SK-N-SH (cell line): ENCODE measurements at regions of chr10 and their contacts with region 1.

Region 1: DNA sequence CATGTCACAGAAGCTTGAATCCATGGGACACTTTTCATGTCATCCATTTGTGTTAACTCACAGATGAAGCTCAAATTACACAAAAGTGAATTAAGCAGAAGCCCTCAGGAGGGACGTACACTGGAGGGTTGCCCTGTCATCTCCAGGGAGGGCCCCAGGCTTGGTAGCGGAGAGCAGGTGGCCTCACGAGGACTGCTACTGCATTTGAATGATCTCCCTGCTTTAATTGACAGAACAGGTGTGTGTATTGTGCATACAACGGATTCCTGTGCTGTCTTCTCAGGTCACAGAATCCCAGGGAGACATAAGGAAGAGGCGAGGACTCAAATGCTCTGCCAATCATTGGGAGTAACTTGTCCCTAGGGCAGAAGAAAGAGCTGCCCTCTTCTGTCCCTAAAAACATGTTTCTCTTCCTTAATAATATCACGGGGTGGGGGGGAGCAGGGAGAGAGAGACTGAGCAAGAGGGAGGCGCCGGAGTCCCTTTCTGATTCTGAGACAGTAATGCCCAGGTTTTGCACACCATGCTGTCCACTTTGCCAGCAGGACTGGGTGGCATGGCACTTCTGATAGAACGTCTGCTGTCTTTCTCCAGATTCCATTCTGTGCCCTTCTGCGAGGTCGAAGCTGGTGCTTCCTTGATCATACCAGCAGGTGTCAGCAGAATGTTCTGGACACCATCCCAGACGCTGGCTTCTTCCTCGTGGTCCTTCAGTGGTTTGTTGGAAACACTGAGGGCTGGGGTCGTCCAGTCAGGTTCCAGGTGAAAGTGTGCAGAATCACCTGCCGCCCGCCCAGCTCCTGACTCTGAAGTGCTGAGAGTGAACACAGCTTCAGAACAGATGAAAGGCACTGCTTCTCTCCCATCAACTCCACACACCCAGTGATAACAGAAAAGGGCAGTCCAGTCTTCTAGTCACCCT is 26.2 kb upstream of the RASGEF1A start:
- DNase-seq: peak; percentile 78
- H3K4me3 ChIP-seq: no peak overlapping the region
- H3K27ac ChIP-seq: no peak overlapping the region
- H3K4me1 ChIP-seq: peaks cover 0 to 4% of the 10 kb centered on the region in 2 experiments; a peak in 1 of 4 replicates
- H3K27me3 ChIP-seq: peaks cover 15% of the 10 kb centered on the region; the same call in 1 of the 2 replicates
- CTCF ChIP-seq: peak; percentile 69
- EP300 ChIP-seq: no peak
- RAD21 ChIP-seq: peak; percentile 80

Region 2: DNA sequence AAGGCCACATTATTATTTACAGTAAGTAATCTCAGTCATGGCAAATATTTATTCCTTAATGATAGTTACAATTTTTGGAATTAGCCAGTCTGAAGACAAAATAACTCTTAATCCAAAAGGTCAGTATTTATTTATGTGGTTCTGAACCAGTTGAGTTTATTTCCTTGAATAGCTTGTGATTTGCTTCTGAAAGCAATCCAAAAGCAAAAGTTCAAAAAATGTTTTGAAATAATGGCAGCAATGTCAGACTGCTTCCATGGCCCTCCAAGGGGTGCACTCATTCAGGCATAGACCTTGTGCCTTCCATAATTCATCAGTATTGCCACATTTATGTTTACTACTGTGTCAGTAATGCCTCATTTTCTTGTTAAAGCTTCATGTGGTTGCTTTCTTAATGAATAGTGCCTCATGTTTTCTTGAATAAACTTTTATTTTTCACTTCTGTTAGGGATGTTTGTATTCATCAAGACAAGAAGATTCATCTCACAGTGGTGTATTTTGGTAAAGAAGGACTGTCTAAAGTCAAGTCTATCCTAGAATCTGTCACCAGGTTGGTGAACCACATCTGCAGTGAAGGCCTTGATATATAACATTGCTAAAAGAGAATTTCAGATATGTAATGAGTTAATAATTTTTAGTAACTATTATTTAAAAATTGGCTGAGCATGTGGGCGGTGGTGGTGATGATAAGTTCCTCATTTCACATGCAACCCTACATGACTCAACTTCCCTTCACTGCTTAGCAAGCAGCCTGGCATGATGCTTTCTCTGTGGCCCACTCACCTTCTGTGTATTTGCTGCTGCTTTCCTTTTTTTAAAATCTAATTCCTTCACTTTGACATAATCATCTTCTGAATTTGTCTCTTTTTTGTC is 132.7 kb before region 1 on chr10:
- CTCF ChIA-PET with region 1: no interaction called
- POLR2A ChIA-PET with region 1: no interaction called
- DNase-seq: no peak
- H3K4me3 ChIP-seq: no peak overlapping the region
- H3K27ac ChIP-seq: peak overlapping the region in 1 of 2 experiments; percentile 21; a peak in 1 of 4 replicates
- H3K4me1 ChIP-seq: peaks cover 0 to 5% of the 10 kb centered on the region in 2 experiments; a peak in 2 of 4 replicates
- H3K27me3 ChIP-seq: no peaks in the 10 kb centered on the region
- CTCF ChIP-seq: no peak
- EP300 ChIP-seq: no peak
- RAD21 ChIP-seq: no peak

Region 3: DNA sequence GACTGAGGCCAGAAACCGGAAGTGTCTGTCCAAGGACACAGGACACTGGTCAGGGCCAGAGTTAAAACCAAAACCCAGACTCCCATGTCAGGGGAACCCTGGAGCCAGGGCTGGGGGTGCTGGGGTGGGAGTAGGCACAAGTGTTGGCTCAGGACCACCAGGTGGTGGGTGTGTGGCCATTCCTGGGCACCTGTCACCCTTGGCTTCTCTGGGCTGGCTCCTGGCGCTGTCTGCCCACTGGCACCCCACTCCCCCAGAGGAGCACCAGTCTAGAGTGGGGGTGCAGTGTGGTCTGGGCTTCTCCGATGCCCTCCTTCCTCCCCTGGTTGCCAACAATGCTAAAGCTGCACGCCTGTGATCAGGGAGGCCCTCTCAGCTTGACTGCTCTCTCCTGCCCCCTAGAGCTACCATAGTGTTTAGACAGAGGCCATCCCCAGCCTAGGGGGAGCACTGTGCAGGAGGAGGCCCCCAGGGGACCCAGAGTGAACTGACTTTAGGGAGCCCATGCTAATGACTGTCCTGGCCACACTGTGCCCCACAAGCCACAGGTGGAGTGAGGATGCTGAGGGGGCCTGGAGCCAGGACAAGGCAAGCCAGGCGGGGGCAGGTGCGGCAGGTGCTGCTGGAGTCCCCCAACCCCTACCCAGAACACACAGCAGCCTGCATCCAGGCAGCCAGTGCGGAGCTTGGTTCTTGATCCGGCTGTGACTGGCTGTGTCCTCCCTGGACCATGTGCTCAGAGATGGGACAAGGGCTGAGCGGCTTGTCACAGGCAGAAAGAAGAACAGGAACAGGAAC is 37.2 kb before region 1 on chr10:
- CTCF ChIA-PET with region 1: interaction called, 11 read pairs
- POLR2A ChIA-PET with region 1: no interaction called
- DNase-seq: peak; percentile 82
- H3K4me3 ChIP-seq: peak overlapping the region in 1 of 2 experiments; percentile 19; a peak in 1 of 4 replicates
- H3K27ac ChIP-seq: no peak overlapping the region
- H3K4me1 ChIP-seq: peaks cover 0 to 7% of the 10 kb centered on the region in 2 experiments; a peak in 1 of 4 replicates
- H3K27me3 ChIP-seq: 0 out of 2 replicates have a peak, but pooled peaks cover 9% of the 10 kb centered on the region
- CTCF ChIP-seq: peak; percentile 50
- EP300 ChIP-seq: no peak
- RAD21 ChIP-seq: peak; percentile 62

Region 4: GRCh38 chr10:43278216-43278615 is 14.8 kb before region 1 on chr10:
- CTCF ChIA-PET with region 1: interaction called, 23 read pairs
- POLR2A ChIA-PET with region 1: no interaction called
- DNase-seq: no peak
- H3K4me3 ChIP-seq: no peak overlapping the region
- H3K27ac ChIP-seq: no peak overlapping the region
- H3K4me1 ChIP-seq: no peaks in the 10 kb centered on the region
- H3K27me3 ChIP-seq: peaks cover 13% of the 10 kb centered on the region; the same call in 1 of the 2 replicates
- CTCF ChIP-seq: no peak
- EP300 ChIP-seq: no peak
- RAD21 ChIP-seq: no peak

Region 5: GRCh38 chr10:43348511-43349312 is 55.7 kb after region 1 on chr10:
- CTCF ChIA-PET with region 1: interaction called, 90 read pairs
- POLR2A ChIA-PET with region 1: no interaction called
- DNase-seq: peak; percentile 95
- H3K4me3 ChIP-seq: no peak overlapping the region; a peak in 1 of 4 replicates
- H3K27ac ChIP-seq: no peak overlapping the region
- H3K4me1 ChIP-seq: peaks cover 0 to 17% of the 10 kb centered on the region in 2 experiments; a peak in 2 of 4 replicates
- H3K27me3 ChIP-seq: no peaks in the 10 kb centered on the region
- CTCF ChIP-seq: peak; percentile 90
- EP300 ChIP-seq: no peak
- RAD21 ChIP-seq: peak; percentile 93